Mammary epithelial cell (primary cell): ENCODE measurements at regions of chr11 and their contacts with region 1.

Region 1: GRCh38 chr11:71302911-71303310 is 50.5 kb upstream of the SHANK2 start:
- DNase-seq: no peak
- H3K4me3 ChIP-seq: no peak overlapping the region
- H3K27ac ChIP-seq: no peak overlapping the region
- H3K4me1 ChIP-seq: peaks cover 21% of the 10 kb centered on the region
- H3K27me3 ChIP-seq: no peaks in the 10 kb centered on the region
- CTCF ChIP-seq: peak in 1 of 2 donors; percentile 1

Region 2: GRCh38 chr11:71114124-71114851 is 188.6 kb before region 1 on chr11:
- CTCF ChIA-PET with region 1: no interaction called
- dilution Hi-C with region 1: no loop called
- in situ Hi-C with region 1: no loop called
- intact Hi-C with region 1: no loop called
- DNase-seq: no peak
- H3K4me3 ChIP-seq: no peak overlapping the region
- H3K27ac ChIP-seq: no peak overlapping the region
- H3K4me1 ChIP-seq: no peaks in the 10 kb centered on the region
- H3K27me3 ChIP-seq: no peaks in the 10 kb centered on the region
- CTCF ChIP-seq: no peak

Region 3: GRCh38 chr11:71255323-71255722 is 47.6 kb before region 1 on chr11:
- CTCF ChIA-PET with region 1: no interaction called
- dilution Hi-C with region 1: no loop called
- in situ Hi-C with region 1: no loop called
- intact Hi-C with region 1: no loop called
- DNase-seq: peak; percentile 17
- H3K4me3 ChIP-seq: no peak overlapping the region
- H3K27ac ChIP-seq: no peak overlapping the region
- H3K4me1 ChIP-seq: peaks cover 14% of the 10 kb centered on the region
- H3K27me3 ChIP-seq: no peaks in the 10 kb centered on the region
- CTCF ChIP-seq: no peak

Region 4: DNA sequence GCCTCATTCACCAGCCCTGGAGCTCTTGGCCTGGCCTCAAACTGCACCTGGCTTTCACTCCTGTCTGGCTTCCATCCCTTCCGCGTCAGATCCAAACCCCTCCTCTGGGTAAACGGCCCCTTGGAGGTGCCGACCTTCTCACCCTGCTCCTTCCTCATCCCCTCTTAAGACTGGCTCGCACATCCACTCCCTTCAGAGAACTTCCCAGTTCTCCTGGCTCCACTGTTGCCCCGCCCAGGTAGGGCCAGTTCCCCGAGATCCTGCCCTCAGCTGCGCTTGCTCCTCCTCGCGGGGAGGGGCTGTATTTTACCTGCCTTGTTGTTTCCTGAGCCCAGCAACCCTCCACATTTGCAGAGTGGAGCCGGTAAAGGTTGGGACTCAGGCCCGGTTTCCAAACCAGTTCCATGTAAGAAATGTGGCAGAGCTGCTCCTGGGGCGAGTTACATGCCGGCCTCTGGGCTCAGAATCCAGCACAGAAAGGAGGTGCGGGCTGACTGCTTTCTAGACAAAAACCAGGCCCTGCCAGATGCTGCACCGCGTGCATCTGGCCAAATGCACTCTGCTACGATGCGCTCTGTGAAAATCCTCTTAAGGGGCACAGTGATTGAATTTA is 36.6 kb before region 1 on chr11:
- CTCF ChIA-PET with region 1: no interaction called
- dilution Hi-C with region 1: no loop called
- in situ Hi-C with region 1: no loop called
- intact Hi-C with region 1: no loop called
- DNase-seq: no peak
- H3K4me3 ChIP-seq: no peak overlapping the region
- H3K27ac ChIP-seq: no peak overlapping the region
- H3K4me1 ChIP-seq: no peaks in the 10 kb centered on the region
- H3K27me3 ChIP-seq: no peaks in the 10 kb centered on the region
- CTCF ChIP-seq: no peak

Region 5: DNA sequence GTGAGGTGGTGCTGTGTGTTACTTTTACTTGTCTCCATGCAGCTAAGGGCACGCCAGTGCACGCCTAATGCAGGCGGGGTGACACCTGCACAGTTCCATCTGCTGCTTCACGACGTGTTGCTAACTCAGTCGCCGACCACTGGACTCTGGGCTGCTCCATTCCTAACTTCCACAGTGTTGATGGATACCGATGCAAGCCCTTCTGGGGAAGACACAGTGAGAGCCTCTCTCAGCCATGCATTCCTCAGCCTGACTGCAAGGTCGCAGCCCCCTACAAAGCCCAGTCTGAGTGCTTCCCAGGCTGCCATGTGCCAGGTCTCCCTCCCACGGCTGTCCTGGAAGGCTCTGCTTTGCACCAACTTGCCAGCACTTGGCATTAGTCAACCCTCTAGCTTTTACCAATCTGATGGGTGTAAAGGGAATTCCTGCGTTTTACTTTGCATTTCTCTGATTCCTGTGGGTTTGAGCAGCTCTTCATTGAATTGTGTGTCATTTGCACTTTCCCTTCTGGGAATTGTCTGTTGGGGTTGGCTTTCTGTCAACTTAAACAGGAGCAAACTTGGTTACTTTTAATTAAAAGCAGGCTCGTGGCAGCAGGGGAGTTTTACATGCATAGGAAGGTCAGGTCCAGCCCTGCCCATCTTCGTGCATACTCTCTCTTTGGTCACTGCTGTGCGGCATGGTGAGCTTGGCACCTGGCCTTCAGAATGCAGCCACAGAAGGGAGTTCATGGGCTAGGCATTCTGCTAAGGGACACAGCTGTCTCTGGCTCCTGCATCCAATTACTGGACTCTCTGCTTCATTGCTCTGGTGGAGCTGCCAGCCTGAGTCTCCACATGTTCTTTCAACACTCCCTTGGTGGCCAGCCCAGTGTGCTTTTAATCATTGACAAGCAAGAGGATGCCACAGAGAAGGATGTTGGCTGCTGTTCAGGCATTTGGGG is 15.9 kb before region 1 on chr11:
- CTCF ChIA-PET with region 1: interaction called, 8 read pairs
- dilution Hi-C with region 1: no loop called
- in situ Hi-C with region 1: no loop called
- intact Hi-C with region 1: loop called (anchors 1 kb)
- DNase-seq: peak; percentile 95
- H3K4me3 ChIP-seq: peak overlapping the region in 2 of 3 experiments; percentile 1 to 11
- H3K27ac ChIP-seq: peak overlapping the region; percentile 52
- H3K4me1 ChIP-seq: peaks cover 48% of the 10 kb centered on the region
- H3K27me3 ChIP-seq: no peaks in the 10 kb centered on the region
- CTCF ChIP-seq: no peak

Region 6: DNA sequence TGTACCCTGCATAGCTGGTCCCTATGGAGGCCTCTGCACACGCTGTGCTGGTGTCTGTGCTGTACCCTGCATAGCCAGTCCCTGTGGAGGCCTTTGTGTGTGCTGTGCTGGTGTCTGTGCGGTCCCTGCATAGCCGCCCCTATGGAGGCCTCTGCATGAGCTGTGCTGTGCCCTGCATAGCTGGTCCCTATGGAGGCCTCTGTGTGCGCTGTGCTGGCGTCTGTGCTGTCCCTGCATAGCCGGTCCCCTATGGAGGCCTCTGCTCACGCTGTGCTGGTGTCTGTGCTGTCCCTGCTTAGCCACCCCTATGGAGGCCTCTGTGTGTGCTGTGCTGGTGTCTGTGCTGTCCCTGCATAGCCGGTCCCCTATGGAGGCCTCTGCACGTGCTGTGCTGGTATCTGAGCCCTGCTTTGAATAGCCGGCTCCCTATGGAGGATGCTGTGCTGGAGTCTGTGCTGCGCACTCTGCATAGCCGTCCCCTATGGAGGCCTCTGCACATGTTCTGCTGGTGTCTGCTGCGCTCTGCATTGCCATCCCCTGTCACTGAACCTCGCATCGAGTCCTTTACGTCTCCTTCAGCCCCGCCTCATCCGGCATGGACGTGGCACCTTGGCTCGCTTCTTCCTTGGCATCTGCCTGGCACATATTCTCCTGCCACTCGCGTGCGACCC is 156.3 kb after region 1 on chr11:
- CTCF ChIA-PET with region 1: no interaction called
- dilution Hi-C with region 1: no loop called
- in situ Hi-C with region 1: no loop called
- intact Hi-C with region 1: no loop called
- DNase-seq: no peak
- H3K4me3 ChIP-seq: no peak overlapping the region
- H3K27ac ChIP-seq: no peak overlapping the region
- H3K4me1 ChIP-seq: peaks cover 11% of the 10 kb centered on the region
- H3K27me3 ChIP-seq: no peaks in the 10 kb centered on the region
- CTCF ChIP-seq: no peak